ENCODE measurements at regions of chr10 and their contacts with region 1.

Region 1: GRCh38 chr10:103244663-103245271 is 920 bp upstream of the RPEL1 start:
- DNase-seq: peak; percentile 48 to 76
- ATAC-seq: peak; percentile 86 to 94 (median 89)
- H3K4me3 ChIP-seq: no peak overlapping the region
- H3K27ac ChIP-seq: no peak overlapping the region
- H3K4me1 ChIP-seq: peaks cover 6 to 33% (median 8%) of the 10 kb centered on the region in 9 donors
- H3K27me3 ChIP-seq: no peaks in the 10 kb centered on the region
- CTCF ChIP-seq: peak; percentile 70 to 94 (median 90)

Region 2: GRCh38 chr10:102713814-102714620 is 530.8 kb before region 1 on chr10 and contains the start of gene ARL3:
- intact Hi-C with region 1: loop called in 1 of 10 experiments (anchors 10 kb)
- DNase-seq: peak; percentile 96 to 98
- ATAC-seq: peak; percentile 98 to 99 (median 99)
- H3K4me3 ChIP-seq: peak within 1 kb of the TSS; percentile 66 to 99 (median 92)
- H3K27ac ChIP-seq: peak within 1 kb of the TSS; percentile 13 to 89 (median 83)
- H3K4me1 ChIP-seq: peaks cover 11 to 55% (median 33%) of the 10 kb centered on the region in 9 donors
- H3K27me3 ChIP-seq: no peaks in the 10 kb centered on the region
- CTCF ChIP-seq: peak in 7 of 9 donors; percentile 2 to 49 (median 45)
- total RNA-seq, gene ARL3: 10.9 to 17.8 (median 13.6) TPM

Region 3: DNA sequence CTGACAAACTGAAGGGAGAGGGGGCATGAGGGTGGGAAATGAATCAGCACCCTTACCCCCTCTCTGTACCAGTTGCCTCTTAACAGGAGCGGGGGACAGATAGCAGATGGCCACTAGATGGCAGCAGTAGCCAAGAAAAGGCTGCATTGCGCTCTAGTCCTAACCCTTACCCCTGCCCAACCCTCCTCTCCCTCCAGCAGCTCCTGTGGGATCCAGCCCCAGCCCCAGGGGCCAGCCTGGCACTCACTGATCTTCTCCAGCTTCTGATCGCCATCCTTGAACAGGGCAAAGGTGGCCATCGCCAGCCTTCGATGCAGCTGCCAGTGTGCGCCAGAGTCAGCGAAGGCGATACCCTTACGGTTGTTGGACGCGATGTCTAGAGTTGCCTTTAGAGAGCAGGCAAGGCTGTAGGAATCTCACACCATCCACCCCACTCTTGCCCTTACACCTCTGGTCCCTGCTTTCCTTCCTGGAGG is 409.7 kb before region 1 on chr10:
- intact Hi-C with region 1: loop called in 7 of 10 experiments (anchors 5 to 10 kb)
- DNase-seq: peak; percentile 57 to 80
- ATAC-seq: peak; percentile 90 to 96 (median 94)
- H3K4me3 ChIP-seq: no peak overlapping the region
- H3K27ac ChIP-seq: no peak overlapping the region
- H3K4me1 ChIP-seq: peaks cover 0 to 8% (median 5%) of the 10 kb centered on the region in 9 donors
- H3K27me3 ChIP-seq: no peaks in the 10 kb centered on the region
- CTCF ChIP-seq: peak; percentile 77 to 92 (median 90)

Region 4: DNA sequence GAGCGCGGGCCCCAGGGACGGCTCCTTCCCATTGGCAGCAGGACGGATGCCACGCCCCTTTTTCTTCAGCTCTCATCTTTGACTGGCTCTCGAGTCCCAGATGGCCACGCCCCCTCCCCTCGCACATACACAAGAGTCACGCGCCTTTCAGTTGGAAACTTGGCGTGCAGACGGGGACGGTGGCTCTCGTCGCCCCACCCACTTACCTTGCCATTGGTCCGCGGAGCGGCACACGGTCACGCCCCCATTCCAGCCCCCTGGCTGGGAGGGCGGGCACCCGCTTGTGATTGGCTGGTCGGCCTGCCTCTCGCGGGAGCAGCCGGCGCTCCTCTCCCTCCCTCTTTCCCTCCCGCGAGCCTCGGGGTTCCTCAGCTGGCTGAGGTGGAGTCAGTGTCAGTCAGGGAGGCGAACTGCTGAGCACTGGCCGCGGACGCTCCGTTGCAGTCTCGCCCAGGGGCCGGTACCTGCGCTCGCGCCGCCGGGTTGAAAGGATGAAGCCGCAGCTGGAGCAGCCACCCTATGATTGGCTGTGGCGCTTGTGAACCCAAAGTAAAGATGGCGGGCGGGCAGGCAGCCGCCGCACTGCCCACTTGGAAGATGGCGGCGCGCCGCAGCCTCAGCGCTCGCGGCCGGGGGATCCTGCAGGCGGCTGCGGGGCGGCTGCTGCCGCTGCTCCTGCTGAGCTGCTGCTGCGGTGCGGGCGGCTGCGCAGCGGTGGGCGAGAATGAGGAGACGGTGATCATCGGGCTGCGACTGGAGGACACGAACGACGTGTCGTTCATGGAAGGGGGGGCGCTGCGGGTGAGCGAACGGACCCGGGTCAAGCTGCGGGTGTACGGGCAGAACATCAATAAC is 326.6 kb before region 1 on chr10 and contains the start of gene CNNM2:
- intact Hi-C with region 1: loop called (anchors 1 to 5 kb)
- DNase-seq: peak; percentile 99 to 100
- ATAC-seq: peak; percentile 96 to 99 (median 98)
- H3K4me3 ChIP-seq: peak within 1 kb of the TSS; percentile 65 to 100 (median 91)
- H3K27ac ChIP-seq: peak within 1 kb of the TSS; percentile 58 to 93 (median 84)
- H3K4me1 ChIP-seq: peaks cover 6 to 61% (median 43%) of the 10 kb centered on the region in 9 donors
- H3K27me3 ChIP-seq: peaks cover 0 to 13% (median 0%) of the 10 kb centered on the region in 7 donors
- CTCF ChIP-seq: peak in 1 of 9 donors; percentile 19
- total RNA-seq, gene CNNM2: 2.0 to 5.3 (median 4.1) TPM

Region 5: GRCh38 chr10:103080891-103081581 is 163.7 kb before region 1 on chr10:
- intact Hi-C with region 1: loop called in 5 of 10 experiments (anchors 5 to 10 kb)
- DNase-seq: no peak
- ATAC-seq: peak in 1 of 8 donors; percentile 53
- H3K4me3 ChIP-seq: no peak overlapping the region
- H3K27ac ChIP-seq: no peak overlapping the region
- H3K4me1 ChIP-seq: no peaks in the 10 kb centered on the region
- H3K27me3 ChIP-seq: no peaks in the 10 kb centered on the region
- CTCF ChIP-seq: no peak

Region 6: DNA sequence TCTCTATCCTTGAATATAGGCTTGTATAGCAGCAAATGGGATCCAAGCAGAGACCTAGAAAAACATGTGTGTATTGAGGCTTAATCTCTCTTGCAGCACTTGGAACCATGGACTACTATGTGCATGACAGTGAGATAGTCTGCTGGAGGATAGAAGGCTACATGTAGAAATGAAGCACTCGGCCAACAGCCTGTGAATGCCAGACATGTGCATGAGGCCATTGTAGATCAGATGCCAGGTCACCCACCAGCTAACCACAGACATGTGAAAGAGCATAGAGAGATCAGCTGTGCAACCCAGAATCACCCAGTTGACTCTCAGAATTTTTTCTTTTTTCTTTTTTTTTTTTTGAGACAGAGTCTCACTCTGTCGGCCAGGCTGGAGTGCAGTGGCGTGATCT is 142.6 kb before region 1 on chr10:
- intact Hi-C with region 1: loop called in 4 of 10 experiments (anchors 10 kb)
- DNase-seq: no peak
- ATAC-seq: peak in 5 of 8 donors; percentile 28 to 59 (median 51)
- H3K4me3 ChIP-seq: no peak overlapping the region
- H3K27ac ChIP-seq: no peak overlapping the region
- H3K4me1 ChIP-seq: peaks cover 0 to 34% (median 4%) of the 10 kb centered on the region in 9 donors
- H3K27me3 ChIP-seq: no peaks in the 10 kb centered on the region
- CTCF ChIP-seq: no peak

Region 7: DNA sequence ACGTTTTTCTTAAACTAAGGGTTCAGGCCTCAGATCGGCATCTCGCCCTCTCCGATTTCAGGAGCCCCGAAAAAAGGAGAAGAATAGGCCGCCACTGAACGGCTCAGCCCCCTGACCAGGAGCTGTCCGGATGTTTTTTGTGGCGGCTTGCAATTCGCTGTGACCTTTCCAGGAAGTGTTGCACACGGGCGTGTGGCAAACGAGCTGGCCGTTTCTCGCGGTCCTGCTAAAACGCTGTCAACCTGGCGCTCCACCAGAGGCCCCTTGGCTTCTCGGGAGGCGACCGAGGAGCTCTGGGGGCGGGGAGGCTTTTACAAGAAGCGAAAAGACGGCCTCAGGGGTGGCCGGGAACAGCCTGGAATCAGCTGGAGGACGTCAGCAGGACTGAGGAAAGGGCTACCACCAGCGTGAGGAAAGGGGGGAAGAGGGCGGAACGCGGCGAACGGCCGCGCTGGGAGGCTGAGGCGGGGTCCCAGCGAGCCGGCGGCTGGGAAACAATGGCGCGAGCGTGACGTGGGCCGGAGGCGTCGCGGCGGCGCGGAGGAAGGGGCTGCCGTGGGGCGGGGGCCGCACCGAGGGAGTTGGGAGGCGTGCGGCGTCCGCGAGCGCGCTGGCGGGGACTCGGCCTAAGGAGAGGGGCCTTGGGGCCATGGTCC is 52.2 kb before region 1 on chr10:
- intact Hi-C with region 1: loop called in 3 of 10 experiments (anchors 5 kb)
- DNase-seq: peak; percentile 82 to 86
- ATAC-seq: peak; percentile 70 to 83 (median 77)
- H3K4me3 ChIP-seq: peak overlapping the region; percentile 61 to 97 (median 82)
- H3K27ac ChIP-seq: peak overlapping the region; percentile 93 to 100 (median 98)
- H3K4me1 ChIP-seq: peaks cover 3 to 76% (median 60%) of the 10 kb centered on the region in 9 donors
- H3K27me3 ChIP-seq: no peaks in the 10 kb centered on the region
- CTCF ChIP-seq: peak in 1 of 9 donors; percentile 4